ENCODE measurements at regions of chr17 and their contacts with region 1.

Region 1: GRCh38 chr17:48413613-48414405 is 16.2 kb downstream of the SKAP1 start:
- DNase-seq: peak in 3 of 14 experiments; percentile 22 to 50 (median 28)
- ATAC-seq: peak; percentile 74
- H3K4me3 ChIP-seq: no peak overlapping the region
- H3K4me3 Mint-ChIP-seq: peak overlapping the region; percentile 57
- H3K27ac ChIP-seq: peak overlapping the region; percentile 59 to 63
- H3K27ac Mint-ChIP-seq: peak overlapping the region; percentile 86
- H3K4me1 ChIP-seq: peaks cover 49% of the 10 kb centered on the region
- H3K4me1 Mint-ChIP-seq: peaks cover 86% of the 10 kb centered on the region
- H3K27me3 ChIP-seq: no peaks in the 10 kb centered on the region
- H3K27me3 Mint-ChIP-seq: no peaks in the 10 kb centered on the region
- CTCF ChIP-seq: no peak

Region 2: DNA sequence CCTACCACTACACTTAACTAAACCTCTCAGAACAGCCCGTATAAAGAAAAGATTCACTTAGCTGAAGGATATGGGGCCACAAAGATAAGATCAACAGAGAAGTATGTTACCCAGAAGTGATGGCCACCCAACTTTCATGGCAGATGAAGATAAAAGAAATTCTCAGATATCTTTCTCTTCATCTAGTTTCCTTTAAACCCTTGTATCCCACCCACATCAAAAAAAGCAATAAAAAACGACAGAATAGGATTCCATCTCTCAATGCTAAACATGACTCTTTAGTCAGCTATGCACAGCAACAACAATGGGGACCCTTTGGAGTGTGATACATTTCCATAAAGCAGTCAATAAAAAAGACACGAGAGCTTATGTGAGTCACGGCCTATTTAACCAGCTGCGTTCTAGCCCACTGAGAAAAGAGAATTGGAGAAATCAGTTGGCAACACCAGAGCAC is 219.7 kb before region 1 on chr17:
- CTCF ChIA-PET with region 1: no interaction called
- POLR2A ChIA-PET with region 1: no interaction called
- intact Hi-C with region 1: no loop called
- DNase-seq: peak in 3 of 14 experiments; percentile 16 to 32 (median 29)
- ATAC-seq: peak; percentile 62
- H3K4me3 ChIP-seq: no peak overlapping the region
- H3K4me3 Mint-ChIP-seq: no peak overlapping the region
- H3K27ac ChIP-seq: no peak overlapping the region
- H3K27ac Mint-ChIP-seq: peak overlapping the region; percentile 43
- H3K4me1 ChIP-seq: peaks cover 10% of the 10 kb centered on the region
- H3K4me1 Mint-ChIP-seq: peaks cover 52% of the 10 kb centered on the region
- H3K27me3 ChIP-seq: no peaks in the 10 kb centered on the region
- H3K27me3 Mint-ChIP-seq: no peaks in the 10 kb centered on the region
- CTCF ChIP-seq: no peak

Region 3: DNA sequence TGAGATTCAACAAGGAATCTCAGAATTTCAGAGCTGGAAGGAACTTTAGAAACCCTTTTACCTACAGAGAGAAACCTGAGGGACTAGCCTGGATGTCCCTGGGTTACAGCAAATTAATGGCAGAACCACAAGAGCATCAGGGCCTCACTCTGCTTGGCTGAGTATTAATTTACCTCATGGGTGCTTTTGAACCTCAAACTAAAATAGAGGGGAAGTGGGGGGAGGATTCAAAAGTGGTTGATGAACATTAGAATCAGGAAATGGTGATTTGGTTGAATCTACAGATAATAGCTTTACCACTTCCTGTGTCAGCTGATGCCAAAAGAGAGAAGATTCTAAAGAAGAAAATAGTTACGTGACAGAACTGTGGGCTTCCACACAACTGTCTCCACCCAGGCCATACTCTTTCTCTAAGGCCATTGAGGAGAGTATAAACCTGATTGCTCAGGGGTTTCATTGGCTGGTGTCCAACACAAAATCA is 27.5 kb after region 1 on chr17:
- CTCF ChIA-PET with region 1: interaction called, 5 read pairs
- POLR2A ChIA-PET with region 1: interaction called, 25 read pairs
- intact Hi-C with region 1: no loop called
- DNase-seq: peak in 9 of 14 experiments; percentile 7 to 94 (median 31)
- ATAC-seq: peak; percentile 66
- H3K4me3 ChIP-seq: peak overlapping the region; percentile 1
- H3K4me3 Mint-ChIP-seq: peak overlapping the region; percentile 36
- H3K27ac ChIP-seq: peak overlapping the region; percentile 66 to 72
- H3K27ac Mint-ChIP-seq: peak overlapping the region; percentile 95
- H3K4me1 ChIP-seq: peaks cover 98% of the 10 kb centered on the region
- H3K4me1 Mint-ChIP-seq: peaks cover 94% of the 10 kb centered on the region
- H3K27me3 ChIP-seq: no peaks in the 10 kb centered on the region
- H3K27me3 Mint-ChIP-seq: no peaks in the 10 kb centered on the region
- CTCF ChIP-seq: no peak

Measured in CD4-positive, alpha-beta T cell (primary cell).